ENCODE measurements at regions of chr7 and their contacts with region 1.

Region 1: GRCh38 chr7:148698397-148699023 is at the start of gene CUL1:
- DNase-seq: peak; percentile 74 to 94 (median 85)
- ATAC-seq: peak; percentile 75
- H3K4me3 ChIP-seq: peak within 1 kb of the TSS; percentile 81
- H3K4me3 Mint-ChIP-seq: peak within 1 kb of the TSS; percentile 91
- H3K27ac ChIP-seq: peak within 1 kb of the TSS; percentile 47 to 73
- H3K27ac Mint-ChIP-seq: peak within 1 kb of the TSS; percentile 88
- H3K4me1 ChIP-seq: peaks cover 33% of the 10 kb centered on the region
- H3K4me1 Mint-ChIP-seq: peaks cover 51% of the 10 kb centered on the region
- H3K27me3 ChIP-seq: no peaks in the 10 kb centered on the region
- H3K27me3 Mint-ChIP-seq: no peaks in the 10 kb centered on the region
- CTCF ChIP-seq: no peak
- total RNA-seq, gene CUL1: 31.0 to 31.2 TPM

Region 2: DNA sequence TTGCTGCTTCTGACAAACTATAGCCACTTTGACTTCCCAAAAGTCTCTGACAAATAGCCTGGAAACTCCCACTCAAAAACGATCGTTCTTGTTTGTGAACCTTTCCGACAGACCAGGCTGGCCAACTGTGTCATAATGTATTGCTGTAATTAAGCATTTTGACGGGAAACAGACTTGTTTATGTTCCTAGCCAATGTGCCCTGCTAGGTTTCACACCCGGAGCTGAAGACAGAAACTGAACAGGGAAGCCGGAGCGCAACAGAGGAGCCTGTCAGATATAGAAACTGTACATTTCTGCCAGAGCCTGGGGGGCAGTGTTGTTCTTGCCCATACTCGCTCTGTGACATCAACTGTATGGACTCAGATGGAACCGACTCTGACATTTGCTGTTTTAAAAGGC is 163.3 kb before region 1 on chr7:
- CTCF ChIA-PET with region 1: no interaction called
- POLR2A ChIA-PET with region 1: no interaction called
- intact Hi-C with region 1: no loop called
- DNase-seq: peak in 7 of 14 experiments; percentile 2 to 27 (median 5)
- ATAC-seq: peak; percentile 39
- H3K4me3 ChIP-seq: no peak overlapping the region
- H3K4me3 Mint-ChIP-seq: peak overlapping the region; percentile 49
- H3K27ac ChIP-seq: no peak overlapping the region
- H3K27ac Mint-ChIP-seq: no peak overlapping the region
- H3K4me1 ChIP-seq: peaks cover 3% of the 10 kb centered on the region
- H3K4me1 Mint-ChIP-seq: no peaks in the 10 kb centered on the region
- H3K27me3 ChIP-seq: no peaks in the 10 kb centered on the region
- H3K27me3 Mint-ChIP-seq: peaks cover 23% of the 10 kb centered on the region
- CTCF ChIP-seq: no peak

Region 3: DNA sequence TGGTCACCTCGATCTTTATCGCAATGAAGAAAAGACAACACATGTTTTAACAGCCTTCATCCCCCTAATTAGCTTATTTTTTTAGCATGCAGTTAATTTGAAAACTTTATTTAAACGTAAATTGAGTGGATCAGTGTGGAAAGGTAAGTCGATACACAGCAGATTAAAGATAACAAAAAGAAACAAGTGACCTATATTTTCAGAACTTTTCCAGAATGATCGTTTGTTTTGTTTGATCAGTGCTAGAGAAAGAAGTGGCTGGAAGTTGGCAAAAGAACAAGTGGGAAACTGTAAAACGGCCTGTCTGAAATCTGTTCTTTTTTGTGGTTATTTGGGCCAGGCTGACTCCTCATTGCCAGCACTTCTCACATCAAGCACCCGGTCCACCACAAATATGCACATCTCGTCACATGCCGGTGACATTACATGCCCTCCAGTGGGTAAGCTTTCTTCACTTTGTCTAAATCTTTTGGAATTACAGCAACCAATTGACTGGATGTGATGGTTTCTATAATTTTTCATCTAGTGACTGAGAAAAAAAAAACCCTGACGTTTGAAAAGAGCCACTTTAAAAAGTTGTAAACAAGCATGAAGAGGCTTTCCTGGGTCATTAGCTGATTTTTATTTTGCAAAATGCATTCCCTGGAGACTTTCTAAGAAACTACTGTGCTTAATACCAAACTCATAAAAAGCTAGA is 74.8 kb before region 1 on chr7:
- CTCF ChIA-PET with region 1: no interaction called
- POLR2A ChIA-PET with region 1: interaction called, 24 read pairs
- intact Hi-C with region 1: loop called (anchors 5 kb)
- DNase-seq: no peak
- ATAC-seq: no peak
- H3K4me3 ChIP-seq: no peak overlapping the region
- H3K4me3 Mint-ChIP-seq: no peak overlapping the region
- H3K27ac ChIP-seq: no peak overlapping the region
- H3K27ac Mint-ChIP-seq: no peak overlapping the region
- H3K4me1 ChIP-seq: peaks cover 23% of the 10 kb centered on the region
- H3K4me1 Mint-ChIP-seq: peaks cover 50% of the 10 kb centered on the region
- H3K27me3 ChIP-seq: peaks cover 3 to 4% of the 10 kb centered on the region in 2 experiments
- H3K27me3 Mint-ChIP-seq: peaks cover 13% of the 10 kb centered on the region
- CTCF ChIP-seq: no peak

Region 4: GRCh38 chr7:148650232-148650858 is 48.2 kb before region 1 on chr7:
- CTCF ChIA-PET with region 1: no interaction called
- POLR2A ChIA-PET with region 1: no interaction called
- intact Hi-C with region 1: no loop called
- DNase-seq: no peak
- ATAC-seq: no peak
- H3K4me3 ChIP-seq: no peak overlapping the region
- H3K4me3 Mint-ChIP-seq: no peak overlapping the region
- H3K27ac ChIP-seq: no peak overlapping the region
- H3K27ac Mint-ChIP-seq: no peak overlapping the region
- H3K4me1 ChIP-seq: no peaks in the 10 kb centered on the region
- H3K4me1 Mint-ChIP-seq: no peaks in the 10 kb centered on the region
- H3K27me3 ChIP-seq: no peaks in the 10 kb centered on the region
- H3K27me3 Mint-ChIP-seq: no peaks in the 10 kb centered on the region
- CTCF ChIP-seq: no peak

Region 5: GRCh38 chr7:148670807-148671206 is 27.7 kb before region 1 on chr7:
- CTCF ChIA-PET with region 1: no interaction called
- POLR2A ChIA-PET with region 1: no interaction called
- intact Hi-C with region 1: no loop called
- DNase-seq: no peak
- ATAC-seq: no peak
- H3K4me3 ChIP-seq: no peak overlapping the region
- H3K4me3 Mint-ChIP-seq: no peak overlapping the region
- H3K27ac ChIP-seq: no peak overlapping the region
- H3K27ac Mint-ChIP-seq: no peak overlapping the region
- H3K4me1 ChIP-seq: no peaks in the 10 kb centered on the region
- H3K4me1 Mint-ChIP-seq: no peaks in the 10 kb centered on the region
- H3K27me3 ChIP-seq: no peaks in the 10 kb centered on the region
- H3K27me3 Mint-ChIP-seq: no peaks in the 10 kb centered on the region
- CTCF ChIP-seq: no peak

Region 6: GRCh38 chr7:148720472-148720871 is 22.0 kb after region 1 on chr7:
- CTCF ChIA-PET with region 1: no interaction called
- POLR2A ChIA-PET with region 1: interaction called, 13 read pairs
- intact Hi-C with region 1: loop called in 1 of 2 experiments (anchors 2 kb)
- DNase-seq: no peak
- ATAC-seq: no peak
- H3K4me3 ChIP-seq: no peak overlapping the region
- H3K4me3 Mint-ChIP-seq: no peak overlapping the region
- H3K27ac ChIP-seq: no peak overlapping the region
- H3K27ac Mint-ChIP-seq: no peak overlapping the region
- H3K4me1 ChIP-seq: peaks cover 46% of the 10 kb centered on the region
- H3K4me1 Mint-ChIP-seq: peaks cover 93% of the 10 kb centered on the region
- H3K27me3 ChIP-seq: no peaks in the 10 kb centered on the region
- H3K27me3 Mint-ChIP-seq: no peaks in the 10 kb centered on the region
- CTCF ChIP-seq: no peak

Region 7: GRCh38 chr7:148738737-148739535 is 40.4 kb after region 1 on chr7:
- CTCF ChIA-PET with region 1: no interaction called
- POLR2A ChIA-PET with region 1: interaction called, 3 read pairs
- intact Hi-C with region 1: loop called in 1 of 2 experiments (anchors 5 kb)
- DNase-seq: no peak
- ATAC-seq: no peak
- H3K4me3 ChIP-seq: no peak overlapping the region
- H3K4me3 Mint-ChIP-seq: no peak overlapping the region
- H3K27ac ChIP-seq: no peak overlapping the region
- H3K27ac Mint-ChIP-seq: peak overlapping the region; percentile 33
- H3K4me1 ChIP-seq: no peaks in the 10 kb centered on the region
- H3K4me1 Mint-ChIP-seq: peaks cover 48% of the 10 kb centered on the region
- H3K27me3 ChIP-seq: no peaks in the 10 kb centered on the region
- H3K27me3 Mint-ChIP-seq: no peaks in the 10 kb centered on the region
- CTCF ChIP-seq: no peak

Region 8: GRCh38 chr7:148884299-148885022 is 186.0 kb after region 1 on chr7:
- CTCF ChIA-PET with region 1: interaction called, 3 read pairs
- POLR2A ChIA-PET with region 1: interaction called, 19 read pairs
- intact Hi-C with region 1: loop called in 1 of 2 experiments (anchors 5 kb)
- DNase-seq: peak; percentile 84 to 97 (median 90)
- ATAC-seq: peak; percentile 91
- H3K4me3 ChIP-seq: peak overlapping the region; percentile 88
- H3K4me3 Mint-ChIP-seq: peak overlapping the region; percentile 95
- H3K27ac ChIP-seq: peak overlapping the region; percentile 15 to 86
- H3K27ac Mint-ChIP-seq: peak overlapping the region; percentile 88
- H3K4me1 ChIP-seq: peaks cover 16% of the 10 kb centered on the region
- H3K4me1 Mint-ChIP-seq: peaks cover 30% of the 10 kb centered on the region
- H3K27me3 ChIP-seq: no peaks in the 10 kb centered on the region
- H3K27me3 Mint-ChIP-seq: no peaks in the 10 kb centered on the region
- CTCF ChIP-seq: no peak

Region 9: DNA sequence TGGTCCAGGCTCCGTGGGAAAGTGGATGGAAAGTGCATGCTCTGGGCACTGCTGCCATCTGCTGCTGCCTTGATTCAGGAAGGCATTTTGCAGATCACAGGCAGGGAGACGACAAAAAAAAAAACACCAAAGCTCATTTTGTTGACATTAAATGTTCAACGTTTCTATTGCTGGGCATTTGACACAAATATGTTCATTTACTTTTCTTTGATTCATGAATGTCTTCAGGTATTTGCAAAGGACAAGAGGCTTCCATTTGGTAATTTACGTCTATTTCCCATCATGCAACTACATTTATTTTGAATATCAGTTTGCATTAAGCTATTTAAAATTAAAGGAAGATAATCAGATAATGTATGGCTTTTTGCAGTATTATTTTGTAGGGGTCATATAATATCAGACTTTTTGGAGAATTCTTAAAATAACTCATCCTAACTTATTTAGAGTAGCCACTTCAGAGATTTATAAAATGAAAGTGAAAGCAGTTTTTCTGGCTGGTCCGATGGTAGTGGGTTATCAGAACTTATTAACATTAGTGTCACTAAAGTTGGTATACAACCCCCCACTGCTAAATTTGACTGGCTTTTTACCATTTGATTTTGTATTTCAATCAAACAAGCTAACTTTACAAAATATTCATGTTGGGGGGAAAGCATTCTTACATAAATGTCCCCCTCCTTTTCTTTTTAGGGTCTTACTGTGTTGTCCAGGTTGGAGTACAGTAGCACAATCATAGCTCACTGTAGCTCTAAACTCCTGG is 264.5 kb after region 1 on chr7:
- CTCF ChIA-PET with region 1: no interaction called
- POLR2A ChIA-PET with region 1: interaction called, 15 read pairs
- intact Hi-C with region 1: loop called (anchors 5 to 10 kb)
- DNase-seq: peak; percentile 42 to 85 (median 57)
- ATAC-seq: peak; percentile 66
- H3K4me3 ChIP-seq: peak overlapping the region; percentile 72
- H3K4me3 Mint-ChIP-seq: peak overlapping the region; percentile 94
- H3K27ac ChIP-seq: peak overlapping the region in 1 of 2 donors; percentile 80
- H3K27ac Mint-ChIP-seq: peak overlapping the region; percentile 89
- H3K4me1 ChIP-seq: peaks cover 28% of the 10 kb centered on the region
- H3K4me1 Mint-ChIP-seq: peaks cover 25% of the 10 kb centered on the region
- H3K27me3 ChIP-seq: no peaks in the 10 kb centered on the region
- H3K27me3 Mint-ChIP-seq: no peaks in the 10 kb centered on the region
- CTCF ChIP-seq: peak; percentile 95

Region 10: GRCh38 chr7:149125863-149126661 is 427.6 kb after region 1 on chr7 and contains the start of gene ZNF425:
- CTCF ChIA-PET with region 1: no interaction called
- POLR2A ChIA-PET with region 1: no interaction called
- intact Hi-C with region 1: loop called in 1 of 2 experiments (anchors 10 kb)
- DNase-seq: peak; percentile 87 to 96 (median 93)
- ATAC-seq: peak; percentile 83
- H3K4me3 ChIP-seq: peak within 1 kb of the TSS; percentile 100
- H3K4me3 Mint-ChIP-seq: peak within 1 kb of the TSS; percentile 100
- H3K27ac ChIP-seq: peak within 1 kb of the TSS; percentile 79 to 80
- H3K27ac Mint-ChIP-seq: peak within 1 kb of the TSS; percentile 96
- H3K4me1 ChIP-seq: peaks cover 12% of the 10 kb centered on the region
- H3K4me1 Mint-ChIP-seq: peaks cover 24% of the 10 kb centered on the region
- H3K27me3 ChIP-seq: no peaks in the 10 kb centered on the region
- H3K27me3 Mint-ChIP-seq: no peaks in the 10 kb centered on the region
- CTCF ChIP-seq: peak; percentile 94
- total RNA-seq, gene ZNF425: 0.22 to 0.39 TPM

Measured in CD4-positive, alpha-beta T cell (primary cell).